CD8-positive, alpha-beta T cell (primary cell): ENCODE measurements at regions of chr3 and their contacts with region 1.

Region 1: DNA sequence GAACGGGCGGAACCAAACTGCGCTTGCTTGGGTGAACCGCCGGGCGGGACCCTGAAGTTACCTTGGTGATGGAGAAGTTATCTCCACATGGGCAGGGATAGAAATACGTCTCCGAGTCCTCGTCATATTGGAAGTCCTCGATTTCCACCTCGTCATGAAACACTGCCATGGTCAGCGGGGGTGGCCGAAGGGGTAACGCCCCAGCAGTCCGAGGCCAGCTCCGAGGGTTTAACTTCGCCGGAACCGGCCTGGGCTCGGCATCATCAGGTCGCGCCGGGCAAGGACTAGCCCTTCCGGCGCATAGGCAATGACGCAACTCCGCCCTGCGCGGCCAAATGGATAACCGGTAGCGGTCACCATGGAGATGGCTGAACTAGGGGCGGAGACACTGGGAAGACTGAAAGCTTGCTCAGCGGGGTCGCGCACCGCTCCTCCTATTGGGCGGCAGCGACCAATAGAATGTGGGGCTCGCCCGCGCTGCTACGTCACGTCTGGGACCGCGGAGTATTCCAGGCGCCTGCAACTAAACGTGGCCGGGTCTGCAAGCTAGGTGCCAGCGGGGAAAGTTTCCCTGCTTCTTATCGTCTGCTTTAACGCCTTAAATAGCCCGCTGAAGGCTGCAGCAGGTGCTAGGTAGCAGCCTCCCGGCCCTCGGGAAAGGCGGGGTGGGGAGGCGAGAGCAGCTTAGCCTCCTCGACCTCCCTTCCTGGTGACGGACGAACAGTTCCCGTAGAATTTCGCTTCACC is at the starts of genes DPH3 and OXNAD1:
- DNase-seq: peak; percentile 98 to 100 (median 99)
- ATAC-seq: peak; percentile 90
- H3K4me3 ChIP-seq: peak within 1 kb of the TSS; percentile 72 to 97
- H3K4me3 Mint-ChIP-seq: peak within 1 kb of the TSS; percentile 100
- H3K27ac ChIP-seq: peak within 1 kb of the TSS; percentile 92 to 97
- H3K27ac Mint-ChIP-seq: peak within 1 kb of the TSS; percentile 99
- H3K4me1 ChIP-seq: peaks cover 21% of the 10 kb centered on the region
- H3K4me1 Mint-ChIP-seq: peaks cover 44% of the 10 kb centered on the region
- H3K27me3 ChIP-seq: no peaks in the 10 kb centered on the region
- H3K27me3 Mint-ChIP-seq: no peaks in the 10 kb centered on the region
- CTCF ChIP-seq: no peak
- total RNA-seq, gene DPH3: 9.7 to 13.9 TPM
- total RNA-seq, gene OXNAD1: 156 TPM

Region 2: GRCh38 chr3:15427182-15427880 is 837.5 kb before region 1 on chr3 and contains the starts of genes EAF1 and METTL6:
- CTCF ChIA-PET with region 1: no interaction called
- POLR2A ChIA-PET with region 1: no interaction called
- intact Hi-C with region 1: loop called (anchors 5 kb)
- DNase-seq: peak; percentile 64 to 90 (median 86)
- ATAC-seq: peak; percentile 82
- H3K4me3 ChIP-seq: peak within 1 kb of the TSS; percentile 87 to 96
- H3K4me3 Mint-ChIP-seq: peak within 1 kb of the TSS; percentile 99
- H3K27ac ChIP-seq: peak within 1 kb of the TSS; percentile 81
- H3K27ac Mint-ChIP-seq: peak within 1 kb of the TSS; percentile 98
- H3K4me1 ChIP-seq: peaks cover 43% of the 10 kb centered on the region
- H3K4me1 Mint-ChIP-seq: peaks cover 66% of the 10 kb centered on the region
- H3K27me3 ChIP-seq: no peaks in the 10 kb centered on the region
- H3K27me3 Mint-ChIP-seq: no peaks in the 10 kb centered on the region
- CTCF ChIP-seq: peak; percentile 24
- total RNA-seq, gene EAF1: 33.7 to 36.0 TPM
- total RNA-seq, gene METTL6: 4.1 to 4.9 TPM

Region 3: GRCh38 chr3:16280671-16281070 is 15.8 kb after region 1 on chr3:
- CTCF ChIA-PET with region 1: interaction called, 31 read pairs
- POLR2A ChIA-PET with region 1: interaction called, 13 read pairs
- intact Hi-C with region 1: no loop called
- DNase-seq: no peak
- ATAC-seq: no peak
- H3K4me3 ChIP-seq: no peak overlapping the region
- H3K4me3 Mint-ChIP-seq: no peak overlapping the region
- H3K27ac ChIP-seq: no peak overlapping the region
- H3K27ac Mint-ChIP-seq: no peak overlapping the region
- H3K4me1 ChIP-seq: peaks cover 14% of the 10 kb centered on the region
- H3K4me1 Mint-ChIP-seq: peaks cover 27% of the 10 kb centered on the region
- H3K27me3 ChIP-seq: no peaks in the 10 kb centered on the region
- H3K27me3 Mint-ChIP-seq: no peaks in the 10 kb centered on the region
- CTCF ChIP-seq: no peak

Region 4: DNA sequence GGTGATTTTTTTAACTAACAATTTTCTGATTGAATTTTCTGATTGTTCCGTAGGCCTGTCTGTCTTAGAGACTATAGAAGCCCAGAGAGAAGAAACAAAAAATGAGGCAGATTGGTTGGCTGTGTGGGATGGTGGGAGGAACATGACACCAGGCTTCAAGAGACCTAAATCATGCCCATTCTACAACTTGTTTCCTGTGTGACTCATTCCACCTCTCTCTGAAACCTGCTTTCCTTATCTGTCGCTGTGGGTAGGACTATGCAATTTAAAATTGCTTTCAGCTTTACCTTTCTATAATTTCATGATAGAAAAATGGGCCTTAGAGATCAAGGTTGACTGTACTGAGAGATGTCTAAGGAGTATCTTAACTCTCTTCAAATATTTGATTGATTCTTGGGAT is 44.7 kb after region 1 on chr3:
- CTCF ChIA-PET with region 1: interaction called, 10 read pairs
- POLR2A ChIA-PET with region 1: interaction called, 17 read pairs
- intact Hi-C with region 1: no loop called
- DNase-seq: peak in 7 of 9 experiments; percentile 34 to 88 (median 58)
- ATAC-seq: peak; percentile 73
- H3K4me3 ChIP-seq: no peak overlapping the region
- H3K4me3 Mint-ChIP-seq: peak overlapping the region; percentile 72
- H3K27ac ChIP-seq: peak overlapping the region; percentile 11 to 69
- H3K27ac Mint-ChIP-seq: peak overlapping the region; percentile 97
- H3K4me1 ChIP-seq: peaks cover 94% of the 10 kb centered on the region
- H3K4me1 Mint-ChIP-seq: peaks cover 92% of the 10 kb centered on the region
- H3K27me3 ChIP-seq: no peaks in the 10 kb centered on the region
- H3K27me3 Mint-ChIP-seq: no peaks in the 10 kb centered on the region
- CTCF ChIP-seq: no peak

Region 5: DNA sequence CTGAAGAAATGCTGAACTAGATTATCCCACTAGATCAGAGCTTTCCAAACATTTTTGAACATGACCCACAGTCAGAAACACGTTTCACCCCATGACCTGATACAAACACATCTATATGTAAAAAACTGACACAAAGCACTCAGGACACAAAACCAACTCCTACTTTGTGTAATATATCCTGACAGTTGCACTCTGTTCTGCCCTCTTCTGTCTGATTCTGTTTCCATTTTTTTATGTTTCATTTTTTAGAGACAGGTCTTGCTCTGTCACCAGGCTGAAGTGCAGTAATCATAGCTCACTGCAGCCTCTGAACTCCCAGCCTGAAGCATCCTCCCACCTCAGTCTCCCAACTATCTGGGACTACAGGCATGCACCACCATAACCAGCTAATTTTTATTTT is 264.4 kb after region 1 on chr3:
- CTCF ChIA-PET with region 1: interaction called, 8 read pairs
- POLR2A ChIA-PET with region 1: interaction called, 4 read pairs
- intact Hi-C with region 1: loop called in 1 of 2 experiments (anchors 1 kb)
- DNase-seq: peak in 2 of 9 experiments; percentile 40 to 61
- ATAC-seq: peak; percentile 77
- H3K4me3 ChIP-seq: no peak overlapping the region
- H3K4me3 Mint-ChIP-seq: no peak overlapping the region
- H3K27ac ChIP-seq: no peak overlapping the region
- H3K27ac Mint-ChIP-seq: peak overlapping the region; percentile 2
- H3K4me1 ChIP-seq: peaks cover 6% of the 10 kb centered on the region
- H3K4me1 Mint-ChIP-seq: peaks cover 10% of the 10 kb centered on the region
- H3K27me3 ChIP-seq: no peaks in the 10 kb centered on the region
- H3K27me3 Mint-ChIP-seq: no peaks in the 10 kb centered on the region
- CTCF ChIP-seq: peak; percentile 40

Region 6: DNA sequence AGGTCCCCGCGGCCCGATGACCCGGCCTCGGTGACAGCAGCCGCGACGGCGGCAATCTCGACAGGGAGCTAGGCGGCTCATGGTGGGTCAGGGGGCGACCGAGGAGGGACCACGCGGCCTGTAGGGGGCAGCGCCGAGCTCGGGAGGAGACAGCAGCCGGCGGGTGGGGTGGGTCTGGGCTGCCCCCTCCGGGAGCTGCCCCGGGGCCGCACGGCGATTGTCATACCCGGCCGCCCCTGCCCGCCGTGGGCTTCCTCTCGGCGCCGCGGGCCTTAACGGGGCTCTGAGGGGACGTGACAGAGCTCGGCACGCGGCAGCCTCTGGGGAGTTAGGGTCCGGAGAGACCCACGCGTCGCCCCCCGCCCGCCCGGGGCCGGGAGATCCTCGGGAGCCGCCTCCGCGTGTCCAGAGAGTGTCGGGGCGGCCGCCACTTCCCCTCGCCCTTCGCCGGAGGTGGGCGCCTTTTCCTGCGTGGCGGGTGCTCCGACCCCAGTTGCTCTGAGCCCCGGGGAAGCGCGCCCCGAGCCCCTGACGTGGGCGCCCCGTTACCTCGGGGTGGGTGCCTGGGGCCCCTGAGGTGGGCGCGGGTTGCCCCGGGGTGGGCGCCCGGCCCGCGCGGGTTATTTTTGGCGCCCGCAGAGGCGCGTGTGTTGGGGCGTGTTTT is 619.3 kb after region 1 on chr3:
- CTCF ChIA-PET with region 1: no interaction called
- POLR2A ChIA-PET with region 1: no interaction called
- intact Hi-C with region 1: loop called (anchors 10 kb)
- DNase-seq: peak; percentile 46 to 82 (median 73)
- ATAC-seq: peak; percentile 49
- H3K4me3 ChIP-seq: peak overlapping the region; percentile 56 to 93
- H3K4me3 Mint-ChIP-seq: peak overlapping the region; percentile 95
- H3K27ac ChIP-seq: peak overlapping the region; percentile 62 to 70
- H3K27ac Mint-ChIP-seq: peak overlapping the region; percentile 97
- H3K4me1 ChIP-seq: peaks cover 16% of the 10 kb centered on the region
- H3K4me1 Mint-ChIP-seq: peaks cover 33% of the 10 kb centered on the region
- H3K27me3 ChIP-seq: no peaks in the 10 kb centered on the region
- H3K27me3 Mint-ChIP-seq: no peaks in the 10 kb centered on the region
- CTCF ChIP-seq: peak; percentile 24

Region 7: GRCh38 chr3:17742108-17742879 is 1477.4 kb after region 1 on chr3 and contains the start of gene TBC1D5:
- CTCF ChIA-PET with region 1: no interaction called
- POLR2A ChIA-PET with region 1: no interaction called
- intact Hi-C with region 1: loop called in 1 of 2 experiments (anchors 10 kb)
- DNase-seq: peak; percentile 78 to 97 (median 88)
- ATAC-seq: peak; percentile 91
- H3K4me3 ChIP-seq: peak within 1 kb of the TSS; percentile 60 to 90
- H3K4me3 Mint-ChIP-seq: peak within 1 kb of the TSS; percentile 91
- H3K27ac ChIP-seq: peak within 1 kb of the TSS; percentile 82 to 87
- H3K27ac Mint-ChIP-seq: peak within 1 kb of the TSS; percentile 84
- H3K4me1 ChIP-seq: peaks cover 16% of the 10 kb centered on the region
- H3K4me1 Mint-ChIP-seq: peaks cover 39% of the 10 kb centered on the region
- H3K27me3 ChIP-seq: no peaks in the 10 kb centered on the region
- H3K27me3 Mint-ChIP-seq: no peaks in the 10 kb centered on the region
- CTCF ChIP-seq: no peak
- total RNA-seq, gene TBC1D5: 29.7 to 30.0 TPM